AG04449 (cell line): ENCODE measurements at regions of chr6 and their contacts with region 1.

Region 1: DNA sequence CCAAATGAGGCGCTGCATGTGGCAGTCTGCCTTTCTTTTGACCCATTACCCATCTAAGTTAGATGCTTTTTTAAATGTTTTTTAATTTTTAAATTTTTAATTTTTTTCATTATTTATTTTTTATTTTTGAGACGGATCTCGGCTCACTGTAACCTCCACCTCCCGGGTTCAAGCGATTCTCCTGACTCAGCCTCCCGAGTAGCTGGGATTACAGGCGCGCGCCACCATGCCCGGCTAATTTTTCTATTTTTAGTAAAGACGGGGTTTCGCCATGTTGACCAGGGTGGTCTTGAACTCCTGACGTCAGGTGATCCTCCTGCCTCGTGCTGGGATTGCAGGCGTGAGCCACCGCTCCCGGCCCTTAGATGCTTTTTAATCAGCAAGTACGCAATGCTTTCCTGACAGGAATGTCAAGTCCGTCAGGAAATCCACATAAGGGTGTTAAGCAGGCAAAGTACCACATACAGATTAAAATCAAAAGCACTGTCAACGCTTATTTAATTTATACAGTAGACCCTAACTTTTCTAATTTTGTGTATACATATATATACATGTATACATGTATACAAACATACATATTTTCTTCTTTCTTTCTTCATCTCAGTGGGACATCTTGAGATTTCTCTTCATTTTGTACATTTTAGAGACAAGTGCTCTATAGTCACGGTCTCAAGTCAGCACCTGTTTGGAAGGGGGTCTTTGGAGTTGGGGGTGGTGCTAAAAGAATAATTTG is 995 bp upstream of the GSTA4 start:
- DNase-seq: peak; percentile 70
- H3K4me3 ChIP-seq: peak overlapping the region; percentile 24
- CTCF ChIP-seq: no peak

Region 2: GRCh38 chr6:52724406-52725121 is 271.5 kb before region 1 on chr6:
- CTCF ChIA-PET with region 1: interaction called, 10 read pairs
- POLR2A ChIA-PET with region 1: no interaction called
- DNase-seq: no peak
- H3K4me3 ChIP-seq: no peak overlapping the region
- CTCF ChIP-seq: peak; percentile 77

Region 3: DNA sequence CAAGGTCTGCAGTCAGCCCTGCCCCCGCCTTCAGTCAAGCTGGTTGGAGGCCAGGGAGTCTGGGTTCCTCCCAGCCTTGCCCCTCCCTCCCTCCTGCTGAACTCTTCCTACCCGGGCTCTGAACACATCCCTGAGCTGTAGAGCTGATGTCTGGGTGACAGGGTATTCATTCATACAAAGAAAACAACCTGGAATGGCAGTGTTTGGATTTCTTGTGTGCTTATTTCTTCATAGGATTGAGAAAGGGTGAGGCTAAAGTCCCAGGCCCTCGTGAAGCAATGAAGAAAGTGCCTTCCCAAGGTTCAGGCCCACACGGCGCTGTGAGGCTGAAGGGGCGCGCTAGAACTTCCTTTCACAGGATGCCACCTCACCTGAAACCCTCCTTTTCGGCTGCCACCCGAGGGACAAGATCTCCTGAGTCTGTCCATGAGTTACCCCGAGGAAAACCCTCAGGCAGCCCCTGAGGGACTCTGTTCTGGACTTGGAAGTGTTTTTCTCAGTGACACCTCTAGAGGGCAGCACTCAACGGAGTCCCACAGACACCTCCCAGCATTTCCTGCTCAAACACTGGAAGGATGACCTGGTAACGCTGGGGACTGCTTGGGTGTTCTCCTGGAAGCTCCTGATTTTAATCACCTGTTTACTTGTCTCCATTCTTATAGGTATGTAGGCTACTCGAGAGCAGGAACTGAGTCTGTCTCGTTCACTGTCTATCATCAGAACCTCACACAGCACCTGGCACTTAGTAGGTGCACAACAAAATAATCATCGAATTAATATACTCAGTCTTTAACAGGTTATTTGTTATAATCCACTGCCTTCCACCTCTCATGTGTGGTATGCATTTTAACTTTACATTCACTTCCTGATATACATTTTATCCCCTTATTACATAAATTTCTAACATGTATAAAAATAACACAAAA is 180.6 kb before region 1 on chr6:
- CTCF ChIA-PET with region 1: interaction called, 10 read pairs
- POLR2A ChIA-PET with region 1: no interaction called
- DNase-seq: no peak
- H3K4me3 ChIP-seq: no peak overlapping the region
- CTCF ChIP-seq: peak; percentile 63

Region 4: DNA sequence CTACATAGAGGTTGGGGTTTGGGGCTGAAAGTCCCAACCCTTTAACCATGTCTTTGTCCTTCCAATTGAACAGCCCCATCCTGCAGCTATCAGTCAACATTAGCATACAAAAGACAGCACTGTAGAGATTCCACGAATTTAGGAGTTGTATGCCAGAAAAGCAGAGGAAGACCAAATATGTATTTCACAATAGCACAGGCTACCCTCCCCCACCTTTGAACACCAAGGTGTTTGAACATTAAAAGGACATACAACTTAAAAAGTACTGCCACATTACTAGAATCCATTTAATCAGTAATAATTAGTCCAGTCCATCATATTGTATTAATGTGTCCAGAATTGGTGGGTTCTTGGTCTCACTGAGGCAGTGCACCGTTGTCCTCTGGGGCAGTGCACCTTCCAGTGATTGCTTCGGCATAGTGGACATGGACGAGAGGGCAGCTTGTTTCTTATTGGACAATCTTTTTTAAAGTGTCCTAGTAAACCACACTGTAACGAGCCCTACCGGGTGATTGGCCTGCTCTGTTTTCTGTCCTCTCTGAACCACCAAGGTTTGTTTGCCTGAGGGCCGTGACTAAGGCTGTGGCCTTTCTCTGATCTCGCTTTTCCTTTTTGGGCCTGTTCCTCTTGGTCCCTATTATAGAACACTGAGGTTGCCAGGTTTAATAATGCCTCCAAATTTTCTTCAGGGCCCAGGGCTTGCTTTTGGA is 37.4 kb before region 1 on chr6:
- CTCF ChIA-PET with region 1: no interaction called
- POLR2A ChIA-PET with region 1: no interaction called
- DNase-seq: no peak
- H3K4me3 ChIP-seq: no peak overlapping the region
- CTCF ChIP-seq: no peak

Region 5: GRCh38 chr6:52981222-52981900 is 14.7 kb before region 1 on chr6:
- CTCF ChIA-PET with region 1: interaction called, 20 read pairs
- POLR2A ChIA-PET with region 1: no interaction called
- DNase-seq: no peak
- H3K4me3 ChIP-seq: no peak overlapping the region
- CTCF ChIP-seq: no peak

Region 6: DNA sequence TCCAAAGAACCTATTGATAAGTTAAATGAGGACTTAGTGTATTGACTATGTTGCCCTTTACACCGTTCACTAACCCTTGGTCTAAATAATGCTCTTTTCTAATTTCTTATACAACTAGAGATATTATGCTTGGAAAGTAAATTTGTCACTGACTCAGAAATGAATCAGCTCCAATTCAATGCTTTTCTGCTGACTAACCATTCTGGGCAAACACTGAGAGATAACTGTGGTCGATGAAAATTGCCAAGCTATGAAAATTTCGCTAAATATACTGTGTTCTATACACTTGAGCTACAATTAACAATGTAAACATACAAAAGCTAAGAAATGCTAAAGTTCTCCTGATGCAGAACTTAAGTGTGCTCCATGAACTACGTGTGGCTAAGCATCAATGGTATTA is 46.0 kb after region 1 on chr6:
- CTCF ChIA-PET with region 1: interaction called, 14 read pairs
- POLR2A ChIA-PET with region 1: interaction called, 4 read pairs
- DNase-seq: peak; percentile 85
- H3K4me3 ChIP-seq: no peak overlapping the region
- CTCF ChIP-seq: no peak

Region 7: DNA sequence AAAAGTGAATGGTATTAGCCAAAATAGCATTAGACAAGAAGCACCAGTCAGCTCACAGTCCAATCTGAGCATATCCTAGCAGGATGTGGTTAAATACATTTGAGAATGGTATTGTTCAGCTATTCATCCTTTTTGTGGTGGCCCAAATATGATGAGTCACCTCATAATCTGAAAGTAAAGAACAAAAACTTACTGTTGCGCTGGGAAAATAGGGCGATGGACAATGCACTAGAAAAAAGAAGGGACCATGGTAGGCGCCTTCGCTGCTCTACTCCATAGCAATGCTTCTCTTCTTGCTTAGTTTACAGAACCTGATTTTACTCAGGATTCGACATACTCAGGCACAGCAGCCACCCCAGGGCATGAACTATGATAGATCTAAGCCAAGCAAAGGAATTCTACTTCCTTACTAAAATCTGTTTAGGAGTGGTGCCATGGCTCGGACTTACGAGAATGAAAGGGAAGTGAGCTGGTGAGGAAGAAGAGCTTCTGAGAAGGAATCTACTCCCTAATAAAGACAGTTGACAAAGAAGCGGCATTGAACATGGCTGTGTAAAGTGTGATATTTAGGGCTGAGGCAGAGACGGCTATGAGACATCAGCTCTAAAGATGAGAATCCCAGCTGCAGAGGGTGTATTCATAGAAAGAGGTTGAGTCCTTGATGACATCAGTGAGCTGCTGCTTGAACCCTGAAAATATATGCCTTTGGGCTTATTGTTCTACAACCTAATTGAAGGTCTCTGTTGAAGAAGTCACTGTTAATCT is 52.5 kb after region 1 on chr6:
- CTCF ChIA-PET with region 1: interaction called, 14 read pairs
- POLR2A ChIA-PET with region 1: interaction called, 4 read pairs
- DNase-seq: peak; percentile 65
- H3K4me3 ChIP-seq: peak overlapping the region; percentile 29
- CTCF ChIP-seq: no peak

Region 8: GRCh38 chr6:53064726-53065215 is 68.7 kb after region 1 on chr6:
- CTCF ChIA-PET with region 1: interaction called, 60 read pairs
- POLR2A ChIA-PET with region 1: interaction called, 6 read pairs
- DNase-seq: peak; percentile 82
- H3K4me3 ChIP-seq: peak overlapping the region; percentile 83
- CTCF ChIP-seq: no peak